ENCODE measurements at regions of chr2 and their contacts with region 1.

Region 1: DNA sequence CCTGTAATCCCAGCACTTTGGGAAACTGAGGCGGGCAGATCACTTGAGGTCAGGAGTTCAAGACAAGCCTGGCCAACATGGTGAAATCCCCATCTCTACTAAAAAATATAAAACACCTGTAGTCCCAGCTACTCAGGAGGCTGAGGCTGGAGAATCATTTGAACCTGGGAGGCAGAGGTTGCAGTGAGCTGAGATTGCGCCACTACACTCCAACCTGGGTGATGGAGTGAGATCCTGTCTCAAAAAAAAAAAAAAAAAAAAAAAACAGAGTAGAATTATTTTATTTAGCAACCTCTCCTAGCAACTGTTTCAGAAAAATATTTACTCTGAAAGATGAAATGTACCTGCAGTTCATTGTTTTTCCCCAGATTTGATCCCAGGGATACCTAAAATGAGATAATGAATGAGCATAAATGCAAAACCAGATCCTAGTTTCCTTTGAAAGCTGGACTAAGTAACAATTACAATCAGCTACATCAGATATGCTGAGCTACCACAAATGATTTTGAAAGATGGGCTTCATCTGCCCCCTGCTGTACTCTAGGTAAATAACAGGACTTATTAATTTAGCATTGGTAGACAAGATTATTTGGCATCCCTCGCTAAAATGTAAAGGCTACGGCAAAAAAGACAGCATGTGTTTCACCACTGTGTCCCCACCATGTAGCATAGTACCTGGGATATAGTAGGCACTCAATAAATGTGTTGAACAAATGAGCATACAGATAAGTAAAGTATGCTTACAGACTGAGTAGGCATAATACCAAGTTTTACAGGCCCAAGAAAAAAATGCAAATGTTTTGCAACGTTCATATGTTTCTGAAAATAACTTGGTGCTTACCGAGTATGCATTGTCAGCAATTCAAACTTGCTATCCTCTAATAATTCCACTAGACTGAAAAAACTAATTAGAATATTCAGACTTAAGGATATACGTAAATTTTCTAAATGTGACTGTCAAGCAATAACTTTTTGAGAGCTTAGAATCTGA is 102.5 kb downstream of the ATL2 start:
- DNase-seq: peak in 1 of 10 donors; percentile 21
- H3K4me3 ChIP-seq: no peak overlapping the region
- H3K27ac ChIP-seq: no peak overlapping the region
- H3K27me3 ChIP-seq: no peaks in the 10 kb centered on the region
- CTCF ChIP-seq: peak; percentile 51 to 88 (median 68)

Region 2: GRCh38 chr2:37389989-37390765 is 884.4 kb before region 1 on chr2:
- intact Hi-C with region 1: loop called in 1 of 2 experiments (anchors 10 kb)
- DNase-seq: peak in 3 of 10 donors; percentile 35 to 61 (median 43)
- H3K4me3 ChIP-seq: no peak overlapping the region
- H3K27ac ChIP-seq: peak overlapping the region in 38 of 59 donors; percentile 0 to 77 (median 44)
- H3K27me3 ChIP-seq: no peaks in the 10 kb centered on the region
- CTCF ChIP-seq: no peak

Region 3: DNA sequence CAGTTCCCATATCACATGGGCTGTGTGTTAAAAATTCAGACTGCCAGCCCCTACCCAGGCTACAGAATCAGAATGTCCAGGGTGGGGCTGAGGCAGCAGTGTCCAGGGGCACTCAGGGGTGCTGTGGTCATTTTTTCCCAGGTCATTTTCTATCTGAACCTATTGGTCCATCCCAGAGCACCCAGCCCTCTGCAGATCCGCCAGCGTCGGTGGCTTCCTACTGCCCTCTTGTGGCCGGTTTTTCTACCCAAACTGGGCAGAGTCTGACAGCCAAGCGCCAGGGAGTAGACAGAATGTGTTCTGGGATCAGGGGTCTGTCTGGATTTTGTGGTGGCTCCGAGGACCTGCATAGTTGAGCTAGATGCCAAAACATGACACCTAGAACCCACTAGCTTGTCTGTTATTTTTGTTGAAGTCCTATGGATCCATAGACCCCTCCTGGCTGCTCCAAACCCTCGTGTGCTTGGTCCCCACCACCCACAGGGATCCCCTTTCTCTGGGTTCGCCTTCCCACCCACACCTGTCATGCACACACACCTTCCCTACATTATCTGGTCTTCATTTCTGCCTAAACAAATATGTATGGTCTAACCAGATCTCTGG is 383.6 kb before region 1 on chr2:
- intact Hi-C with region 1: loop called in 1 of 2 experiments (anchors 10 kb)
- DNase-seq: peak in 9 of 10 donors; percentile 35 to 74 (median 52)
- H3K4me3 ChIP-seq: no peak overlapping the region
- H3K27ac ChIP-seq: no peak overlapping the region
- H3K27me3 ChIP-seq: peaks cover 0 to 9% (median 0%) of the 10 kb centered on the region in 45 donors
- CTCF ChIP-seq: peak; percentile 40 to 79 (median 70)

Region 4: DNA sequence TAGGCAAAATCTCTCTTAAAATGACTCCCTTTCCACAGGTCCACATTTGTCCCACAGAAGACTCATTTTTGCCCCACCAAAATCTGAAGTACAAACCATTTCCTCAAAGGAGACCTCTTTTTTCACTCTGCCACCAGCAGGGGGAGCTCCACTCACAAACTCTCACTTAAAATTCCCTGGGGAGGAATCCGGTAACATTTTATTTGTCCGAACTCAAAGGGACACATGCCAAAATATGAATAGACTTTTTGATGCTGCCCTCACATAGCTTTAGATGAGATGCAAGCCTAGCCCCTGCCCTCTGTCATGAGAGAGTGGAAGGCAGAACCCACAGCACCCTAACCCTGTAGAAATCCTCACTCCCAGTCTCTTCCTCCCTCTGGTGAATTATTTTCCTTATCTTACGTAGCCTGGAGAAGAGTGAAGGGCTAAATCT is 292.4 kb before region 1 on chr2:
- intact Hi-C with region 1: loop called (anchors 2 to 10 kb)
- DNase-seq: peak in 8 of 10 donors; percentile 36 to 59 (median 50)
- H3K4me3 ChIP-seq: peak overlapping the region in 42 of 59 donors; percentile 1 to 54 (median 30)
- H3K27ac ChIP-seq: no peak overlapping the region
- H3K27me3 ChIP-seq: no peaks in the 10 kb centered on the region
- CTCF ChIP-seq: peak; percentile 78 to 97 (median 86)

Region 5: GRCh38 chr2:38438883-38439612 is 164.5 kb after region 1 on chr2:
- intact Hi-C with region 1: no loop called
- DNase-seq: no peak
- H3K4me3 ChIP-seq: no peak overlapping the region
- H3K27ac ChIP-seq: no peak overlapping the region
- H3K27me3 ChIP-seq: peaks cover 0 to 18% (median 0%) of the 10 kb centered on the region in 45 donors
- CTCF ChIP-seq: no peak